CD4-positive, alpha-beta T cell (primary cell): ENCODE measurements at regions of chr10 and their contacts with region 1.

Region 1: DNA sequence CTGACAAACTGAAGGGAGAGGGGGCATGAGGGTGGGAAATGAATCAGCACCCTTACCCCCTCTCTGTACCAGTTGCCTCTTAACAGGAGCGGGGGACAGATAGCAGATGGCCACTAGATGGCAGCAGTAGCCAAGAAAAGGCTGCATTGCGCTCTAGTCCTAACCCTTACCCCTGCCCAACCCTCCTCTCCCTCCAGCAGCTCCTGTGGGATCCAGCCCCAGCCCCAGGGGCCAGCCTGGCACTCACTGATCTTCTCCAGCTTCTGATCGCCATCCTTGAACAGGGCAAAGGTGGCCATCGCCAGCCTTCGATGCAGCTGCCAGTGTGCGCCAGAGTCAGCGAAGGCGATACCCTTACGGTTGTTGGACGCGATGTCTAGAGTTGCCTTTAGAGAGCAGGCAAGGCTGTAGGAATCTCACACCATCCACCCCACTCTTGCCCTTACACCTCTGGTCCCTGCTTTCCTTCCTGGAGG is 2.2 kb downstream of the CYP17A1 start:
- DNase-seq: peak; percentile 55 to 87 (median 68)
- ATAC-seq: peak; percentile 93
- H3K4me3 ChIP-seq: no peak overlapping the region
- H3K4me3 Mint-ChIP-seq: no peak overlapping the region
- H3K27ac ChIP-seq: no peak overlapping the region
- H3K27ac Mint-ChIP-seq: no peak overlapping the region
- H3K4me1 ChIP-seq: peaks cover 5% of the 10 kb centered on the region
- H3K4me1 Mint-ChIP-seq: no peaks in the 10 kb centered on the region
- H3K27me3 ChIP-seq: no peaks in the 10 kb centered on the region
- H3K27me3 Mint-ChIP-seq: peaks cover 10% of the 10 kb centered on the region
- CTCF ChIP-seq: peak; percentile 86

Region 2: DNA sequence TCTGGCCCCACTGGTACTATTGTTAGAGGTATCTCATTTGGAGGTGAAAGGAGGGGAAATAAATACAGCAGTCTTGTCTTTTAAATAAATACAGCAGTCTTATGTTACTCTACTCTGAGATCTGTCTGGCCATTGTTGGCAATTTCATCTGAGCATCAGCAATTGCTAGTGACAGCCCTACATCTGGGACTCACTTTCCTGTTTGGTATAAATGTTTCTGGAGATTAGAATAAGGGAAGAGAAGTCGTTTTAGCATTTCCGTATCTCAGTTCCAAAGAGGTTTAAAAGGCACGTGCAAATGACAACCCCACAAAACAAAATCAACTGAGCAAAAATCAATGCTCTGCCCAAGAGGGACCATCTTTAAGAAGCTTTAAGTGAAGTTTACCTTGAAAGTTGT is 65.0 kb after region 1 on chr10:
- CTCF ChIA-PET with region 1: no interaction called
- POLR2A ChIA-PET with region 1: no interaction called
- intact Hi-C with region 1: loop called (anchors 2 kb)
- DNase-seq: no peak
- ATAC-seq: no peak
- H3K4me3 ChIP-seq: no peak overlapping the region
- H3K4me3 Mint-ChIP-seq: no peak overlapping the region
- H3K27ac ChIP-seq: no peak overlapping the region
- H3K27ac Mint-ChIP-seq: no peak overlapping the region
- H3K4me1 ChIP-seq: no peaks in the 10 kb centered on the region
- H3K4me1 Mint-ChIP-seq: no peaks in the 10 kb centered on the region
- H3K27me3 ChIP-seq: no peaks in the 10 kb centered on the region
- H3K27me3 Mint-ChIP-seq: no peaks in the 10 kb centered on the region
- CTCF ChIP-seq: no peak

Region 3: DNA sequence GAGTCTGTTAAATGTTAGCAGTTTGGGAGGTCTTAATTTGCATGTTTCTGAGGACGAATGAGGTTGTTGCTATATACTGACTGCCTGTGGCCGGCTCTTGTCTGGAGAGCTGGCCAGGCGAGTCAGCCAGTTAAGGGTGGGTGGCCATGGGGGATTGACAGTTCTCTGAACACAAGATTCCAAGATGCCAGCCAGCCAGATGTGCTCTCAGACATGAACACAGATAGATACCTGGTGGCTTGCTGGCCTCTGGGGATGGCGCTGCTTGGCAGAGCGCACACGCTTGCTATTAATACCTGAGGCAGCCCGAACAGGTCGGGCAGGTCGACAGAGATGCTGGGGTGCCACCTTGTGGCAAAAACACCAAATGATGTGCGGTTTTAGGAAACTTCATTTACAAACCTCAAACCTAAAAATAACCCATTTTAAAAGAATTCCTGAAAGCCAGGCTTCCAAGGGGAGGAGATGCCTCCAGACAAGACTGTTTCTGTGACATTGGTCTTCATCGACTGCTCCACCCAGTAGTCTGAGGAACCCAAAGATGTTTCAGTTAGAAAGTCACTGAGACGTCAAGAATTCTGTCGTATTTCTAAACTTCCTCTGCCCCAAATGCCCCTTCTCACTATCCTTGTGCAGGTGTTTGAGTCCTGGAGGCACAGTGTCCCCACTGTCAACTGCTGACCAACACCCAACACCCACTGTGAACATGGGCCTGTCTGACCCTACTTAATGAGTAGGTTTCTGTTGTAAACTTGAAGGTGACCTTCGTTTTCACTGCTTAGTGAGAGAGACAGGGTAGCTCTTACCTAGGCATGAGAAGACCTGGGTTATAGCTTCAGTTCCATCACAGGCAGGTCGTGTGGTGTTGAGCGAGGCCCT is 234.6 kb after region 1 on chr10:
- CTCF ChIA-PET with region 1: no interaction called
- POLR2A ChIA-PET with region 1: no interaction called
- intact Hi-C with region 1: loop called in 1 of 2 experiments (anchors 1 kb)
- DNase-seq: peak; percentile 59 to 85 (median 68)
- ATAC-seq: peak; percentile 94
- H3K4me3 ChIP-seq: no peak overlapping the region
- H3K4me3 Mint-ChIP-seq: no peak overlapping the region
- H3K27ac ChIP-seq: no peak overlapping the region
- H3K27ac Mint-ChIP-seq: peak overlapping the region; percentile 61
- H3K4me1 ChIP-seq: peaks cover 19% of the 10 kb centered on the region
- H3K4me1 Mint-ChIP-seq: peaks cover 25% of the 10 kb centered on the region
- H3K27me3 ChIP-seq: no peaks in the 10 kb centered on the region
- H3K27me3 Mint-ChIP-seq: no peaks in the 10 kb centered on the region
- CTCF ChIP-seq: peak; percentile 65

Region 4: GRCh38 chr10:103244663-103245271 is 409.7 kb after region 1 on chr10:
- CTCF ChIA-PET with region 1: interaction called, 4 read pairs
- POLR2A ChIA-PET with region 1: no interaction called
- intact Hi-C with region 1: loop called (anchors 1 kb)
- DNase-seq: peak; percentile 41 to 82 (median 52)
- ATAC-seq: peak; percentile 60
- H3K4me3 ChIP-seq: no peak overlapping the region
- H3K4me3 Mint-ChIP-seq: no peak overlapping the region
- H3K27ac ChIP-seq: no peak overlapping the region
- H3K27ac Mint-ChIP-seq: no peak overlapping the region
- H3K4me1 ChIP-seq: peaks cover 7% of the 10 kb centered on the region
- H3K4me1 Mint-ChIP-seq: peaks cover 6% of the 10 kb centered on the region
- H3K27me3 ChIP-seq: peaks cover 0 to 2% of the 10 kb centered on the region in 2 experiments
- H3K27me3 Mint-ChIP-seq: no peaks in the 10 kb centered on the region
- CTCF ChIP-seq: peak; percentile 83

Region 5: GRCh38 chr10:103333925-103334520 is 499.0 kb after region 1 on chr10:
- CTCF ChIA-PET with region 1: interaction called, 3 read pairs
- POLR2A ChIA-PET with region 1: no interaction called
- intact Hi-C with region 1: loop called (anchors 1 to 2 kb)
- DNase-seq: peak in 3 of 14 experiments; percentile 35 to 44 (median 36)
- ATAC-seq: no peak
- H3K4me3 ChIP-seq: no peak overlapping the region
- H3K4me3 Mint-ChIP-seq: no peak overlapping the region
- H3K27ac ChIP-seq: no peak overlapping the region
- H3K27ac Mint-ChIP-seq: no peak overlapping the region
- H3K4me1 ChIP-seq: no peaks in the 10 kb centered on the region
- H3K4me1 Mint-ChIP-seq: no peaks in the 10 kb centered on the region
- H3K27me3 ChIP-seq: no peaks in the 10 kb centered on the region
- H3K27me3 Mint-ChIP-seq: no peaks in the 10 kb centered on the region
- CTCF ChIP-seq: peak; percentile 76

Region 6: GRCh38 chr10:103481974-103482531 is 647.0 kb after region 1 on chr10:
- CTCF ChIA-PET with region 1: no interaction called
- POLR2A ChIA-PET with region 1: no interaction called
- intact Hi-C with region 1: loop called (anchors 1 to 2 kb)
- DNase-seq: peak in 5 of 14 experiments; percentile 15 to 84 (median 81)
- ATAC-seq: peak; percentile 78
- H3K4me3 ChIP-seq: no peak overlapping the region
- H3K4me3 Mint-ChIP-seq: no peak overlapping the region
- H3K27ac ChIP-seq: no peak overlapping the region
- H3K27ac Mint-ChIP-seq: no peak overlapping the region
- H3K4me1 ChIP-seq: peaks cover 7% of the 10 kb centered on the region
- H3K4me1 Mint-ChIP-seq: peaks cover 5% of the 10 kb centered on the region
- H3K27me3 ChIP-seq: no peaks in the 10 kb centered on the region
- H3K27me3 Mint-ChIP-seq: no peaks in the 10 kb centered on the region
- CTCF ChIP-seq: peak; percentile 90